Breast epithelium (tissue), 4 donors: ENCODE measurements at regions of chr5 and their contacts with region 1.

Region 1: DNA sequence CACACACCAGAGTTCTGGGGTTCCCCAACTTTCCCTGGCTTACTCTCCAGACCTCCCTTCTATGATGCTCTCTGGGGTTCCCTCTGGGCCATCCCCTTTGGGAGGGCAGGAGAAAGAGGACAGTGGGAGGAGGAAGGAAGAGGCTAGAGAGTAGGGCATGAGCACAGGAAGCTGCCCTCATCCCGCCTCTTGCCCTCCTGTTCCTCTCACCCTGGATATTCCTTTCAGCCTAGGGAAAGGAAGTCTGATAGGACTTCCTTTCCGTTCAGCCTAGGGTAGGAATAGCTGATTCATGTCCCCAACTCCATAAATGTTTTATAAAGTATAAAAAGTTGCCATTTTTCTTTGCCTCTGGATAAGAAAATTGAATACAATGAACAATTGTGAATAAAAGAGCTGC is 7.4 kb downstream of the MAP1B start:
- DNase-seq: no peak
- H3K4me3 ChIP-seq: no peak overlapping the region
- H3K27ac ChIP-seq: peak overlapping the region; percentile 48 to 77
- H3K4me1 ChIP-seq: no peaks in the 10 kb centered on the region
- H3K27me3 ChIP-seq: no peaks in the 10 kb centered on the region
- CTCF ChIP-seq: no peak
- POLR2A ChIP-seq: no peak

Region 2: DNA sequence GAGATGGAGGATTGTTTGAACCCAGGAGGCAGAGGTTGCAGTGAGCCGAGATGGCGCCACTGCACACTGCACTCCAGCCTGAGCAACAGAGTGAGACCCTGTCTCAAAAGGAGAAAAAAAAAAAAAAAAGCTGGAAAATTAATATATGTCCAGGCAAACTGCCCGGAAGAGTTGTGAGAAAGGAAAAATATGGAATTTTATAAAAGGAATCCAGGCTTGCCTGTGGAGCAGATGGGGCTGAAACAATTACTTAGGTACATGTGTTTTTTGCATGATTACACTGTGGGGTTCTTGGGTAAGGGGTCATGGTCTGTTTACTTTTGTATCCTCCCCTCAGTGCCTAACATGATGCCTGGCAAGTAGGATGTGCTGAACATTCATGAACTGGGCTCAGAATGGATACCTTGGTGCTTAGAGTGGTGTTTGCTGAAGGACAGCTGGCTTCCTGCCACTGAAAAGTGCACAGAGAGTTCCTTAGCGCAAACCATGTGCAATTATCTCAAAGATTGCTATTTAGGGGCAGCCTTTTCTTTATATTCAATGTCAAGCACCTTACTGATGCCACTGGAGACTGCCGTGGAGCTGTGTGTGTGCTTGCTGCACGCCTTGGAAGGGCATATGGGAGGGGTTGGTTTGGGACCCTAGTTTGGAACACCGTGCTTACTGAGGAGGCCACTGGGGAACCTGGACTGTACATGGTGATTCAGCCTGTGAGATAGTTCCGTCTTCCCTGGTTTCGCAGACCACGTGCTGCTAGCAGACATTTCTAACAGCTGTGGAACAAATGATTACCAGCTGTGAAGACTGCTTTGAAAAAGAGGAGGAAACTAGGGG is 71.1 kb after region 1 on chr5:
- intact Hi-C with region 1: loop called (anchors 2 kb)
- DNase-seq: no peak
- H3K4me3 ChIP-seq: no peak overlapping the region
- H3K27ac ChIP-seq: peak overlapping the region in 1 of 2 donors; percentile 32
- H3K4me1 ChIP-seq: no peaks in the 10 kb centered on the region
- H3K27me3 ChIP-seq: no peaks in the 10 kb centered on the region
- CTCF ChIP-seq: no peak
- POLR2A ChIP-seq: no peak

Region 3: GRCh38 chr5:72252574-72253155 is 138.0 kb after region 1 on chr5:
- intact Hi-C with region 1: no loop called
- DNase-seq: peak in 1 of 2 donors; percentile 26
- H3K4me3 ChIP-seq: no peak overlapping the region
- H3K27ac ChIP-seq: peak overlapping the region; percentile 49 to 59
- H3K4me1 ChIP-seq: peaks cover 0 to 7% of the 10 kb centered on the region in 2 donors
- H3K27me3 ChIP-seq: no peaks in the 10 kb centered on the region
- CTCF ChIP-seq: no peak
- POLR2A ChIP-seq: no peak